Activated CD4-positive, alpha-beta T cell treated with anti-CD3 and anti-CD28 coated beads for 36 hours (primary cell): ENCODE measurements at regions of chr5 and their contacts with region 1.

Region 1: GRCh38 chr5:119367502-119368237 is 11.9 kb downstream of the TNFAIP8 start:
- DNase-seq: peak; percentile 25
- ATAC-seq: peak; percentile 69
- H3K4me3 Mint-ChIP-seq: peak overlapping the region; percentile 57
- H3K27ac Mint-ChIP-seq: peak overlapping the region; percentile 95
- H3K4me1 Mint-ChIP-seq: peaks cover 89% of the 10 kb centered on the region
- H3K27me3 Mint-ChIP-seq: no peaks in the 10 kb centered on the region

Region 2: DNA sequence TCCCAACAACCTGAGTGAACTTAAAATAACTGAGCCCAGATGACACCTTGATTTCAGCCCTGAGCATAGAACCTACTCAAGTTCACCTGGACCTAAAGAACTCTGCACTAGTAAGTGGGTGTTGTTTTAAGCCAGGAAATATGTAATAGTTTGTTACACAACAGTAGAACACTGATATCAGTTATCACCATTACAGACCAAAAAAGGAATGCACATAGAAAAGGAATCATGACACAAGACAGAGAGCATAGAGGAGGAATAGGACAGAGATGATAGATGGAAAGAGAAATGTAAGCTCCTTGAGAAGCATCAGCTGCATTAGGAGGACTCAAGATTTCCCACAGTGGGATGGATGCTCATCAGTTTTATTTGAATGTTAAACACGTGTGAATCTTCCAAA is 1696.1 kb before region 1 on chr5:
- CTCF ChIA-PET with region 1: no interaction called
- POLR2A ChIA-PET with region 1: no interaction called
- intact Hi-C with region 1: no loop called
- DNase-seq: no peak
- ATAC-seq: no peak
- H3K4me3 Mint-ChIP-seq: no peak overlapping the region
- H3K27ac Mint-ChIP-seq: no peak overlapping the region
- H3K4me1 Mint-ChIP-seq: no peaks in the 10 kb centered on the region
- H3K27me3 Mint-ChIP-seq: no peaks in the 10 kb centered on the region

Region 3: GRCh38 chr5:119037501-119038215 is 330.0 kb before region 1 on chr5:
- CTCF ChIA-PET with region 1: no interaction called
- POLR2A ChIA-PET with region 1: no interaction called
- intact Hi-C with region 1: no loop called
- DNase-seq: no peak
- ATAC-seq: no peak
- H3K4me3 Mint-ChIP-seq: no peak overlapping the region
- H3K27ac Mint-ChIP-seq: no peak overlapping the region
- H3K4me1 Mint-ChIP-seq: peaks cover 5% of the 10 kb centered on the region
- H3K27me3 Mint-ChIP-seq: no peaks in the 10 kb centered on the region

Region 4: GRCh38 chr5:119309326-119309725 is 58.3 kb before region 1 on chr5:
- CTCF ChIA-PET with region 1: no interaction called
- POLR2A ChIA-PET with region 1: interaction called, 5 read pairs
- intact Hi-C with region 1: loop called (anchors 2 kb)
- DNase-seq: no peak
- ATAC-seq: no peak
- H3K4me3 Mint-ChIP-seq: peak overlapping the region; percentile 53
- H3K27ac Mint-ChIP-seq: peak overlapping the region; percentile 91
- H3K4me1 Mint-ChIP-seq: peaks cover 91% of the 10 kb centered on the region
- H3K27me3 Mint-ChIP-seq: no peaks in the 10 kb centered on the region

Region 5: DNA sequence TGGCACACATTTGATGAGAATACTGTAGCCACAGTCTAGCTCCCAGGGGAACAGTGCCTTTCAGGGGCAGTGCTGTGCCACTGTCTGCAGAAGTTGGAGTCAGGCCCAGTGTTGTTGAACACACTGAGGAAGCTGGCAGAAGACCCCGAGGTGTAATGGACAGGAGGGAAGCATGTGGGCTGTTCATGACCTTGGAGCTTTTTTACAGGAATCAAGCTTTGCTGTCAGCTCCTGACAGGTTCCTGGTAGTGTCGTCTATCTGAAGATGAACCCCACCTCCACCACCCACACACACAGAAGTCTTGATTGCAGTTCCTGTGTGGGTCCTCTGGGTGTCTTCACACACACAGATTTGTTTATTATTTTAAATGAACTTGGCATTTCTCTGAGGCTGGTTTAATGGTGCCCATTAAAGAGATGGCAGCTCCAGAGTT is 52.1 kb before region 1 on chr5:
- CTCF ChIA-PET with region 1: interaction called, 10 read pairs
- POLR2A ChIA-PET with region 1: interaction called, 5 read pairs
- intact Hi-C with region 1: loop called in 1 of 2 experiments (anchors 2 kb)
- DNase-seq: peak; percentile 78
- ATAC-seq: peak; percentile 77
- H3K4me3 Mint-ChIP-seq: peak overlapping the region; percentile 28
- H3K27ac Mint-ChIP-seq: peak overlapping the region; percentile 91
- H3K4me1 Mint-ChIP-seq: peaks cover 91% of the 10 kb centered on the region
- H3K27me3 Mint-ChIP-seq: no peaks in the 10 kb centered on the region

Region 6: GRCh38 chr5:119328753-119329602 is 38.7 kb before region 1 on chr5:
- CTCF ChIA-PET with region 1: interaction called, 6 read pairs
- POLR2A ChIA-PET with region 1: interaction called, 9 read pairs
- intact Hi-C with region 1: loop called (anchors 2 kb)
- DNase-seq: peak; percentile 80
- ATAC-seq: peak; percentile 58
- H3K4me3 Mint-ChIP-seq: peak overlapping the region; percentile 45
- H3K27ac Mint-ChIP-seq: peak overlapping the region; percentile 98
- H3K4me1 Mint-ChIP-seq: peaks cover 96% of the 10 kb centered on the region
- H3K27me3 Mint-ChIP-seq: no peaks in the 10 kb centered on the region

Region 7: DNA sequence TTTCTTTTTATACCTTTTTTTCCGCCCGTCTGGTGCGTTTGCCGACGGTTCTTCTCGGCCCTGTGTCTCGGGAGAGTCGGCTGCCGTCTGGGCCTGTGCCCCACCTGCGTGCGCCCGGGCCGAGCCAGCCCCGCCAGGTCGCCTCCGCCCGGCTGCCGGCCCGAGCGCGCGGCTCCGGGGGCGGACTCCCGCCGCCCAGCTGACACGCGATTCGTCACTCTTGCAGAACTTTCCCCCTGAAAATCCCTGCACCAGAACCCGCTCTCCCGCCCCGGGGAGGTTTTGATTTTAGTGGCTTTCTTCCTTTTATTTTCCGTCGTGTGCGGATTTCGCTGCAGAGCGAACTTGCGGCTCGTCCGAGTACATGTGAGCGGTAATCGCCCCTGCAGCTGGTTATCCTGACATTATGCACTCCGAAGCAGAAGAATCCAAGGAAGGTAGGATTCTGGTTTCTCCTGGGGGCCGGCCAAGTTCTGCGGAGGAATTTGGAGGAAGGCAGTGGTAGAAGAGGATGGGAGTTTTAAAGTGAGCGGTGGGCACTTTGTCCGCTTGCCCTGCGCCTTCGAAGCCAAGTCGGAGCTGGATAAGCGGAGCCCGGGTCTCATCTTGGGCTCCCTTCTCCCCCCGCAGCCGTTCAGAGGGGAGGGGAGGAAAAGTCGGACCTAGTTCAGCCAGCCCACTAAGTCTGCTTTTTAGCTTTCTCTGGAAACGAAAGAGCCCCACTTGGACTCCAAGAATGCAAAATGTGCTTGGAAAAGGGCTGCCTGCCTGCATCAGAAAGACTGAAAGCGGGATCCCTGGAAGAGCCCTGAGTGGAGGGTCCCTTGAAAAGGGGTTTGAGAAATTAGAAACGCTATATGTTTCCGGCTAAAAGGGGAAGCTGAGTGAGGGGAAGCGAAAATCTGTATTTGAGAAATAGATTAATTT is 11.7 kb before region 1 on chr5 and contains the start of gene TNFAIP8:
- CTCF ChIA-PET with region 1: interaction called, 22 read pairs
- POLR2A ChIA-PET with region 1: interaction called, 4 read pairs
- intact Hi-C with region 1: loop called (anchors 1 kb)
- DNase-seq: peak; percentile 91
- ATAC-seq: peak; percentile 65
- H3K4me3 Mint-ChIP-seq: peak within 1 kb of the TSS; percentile 98
- H3K27ac Mint-ChIP-seq: peak within 1 kb of the TSS; percentile 99
- H3K4me1 Mint-ChIP-seq: peaks cover 62% of the 10 kb centered on the region
- H3K27me3 Mint-ChIP-seq: no peaks in the 10 kb centered on the region
- total RNA-seq, gene TNFAIP8: 166 to 171 TPM

Region 8: DNA sequence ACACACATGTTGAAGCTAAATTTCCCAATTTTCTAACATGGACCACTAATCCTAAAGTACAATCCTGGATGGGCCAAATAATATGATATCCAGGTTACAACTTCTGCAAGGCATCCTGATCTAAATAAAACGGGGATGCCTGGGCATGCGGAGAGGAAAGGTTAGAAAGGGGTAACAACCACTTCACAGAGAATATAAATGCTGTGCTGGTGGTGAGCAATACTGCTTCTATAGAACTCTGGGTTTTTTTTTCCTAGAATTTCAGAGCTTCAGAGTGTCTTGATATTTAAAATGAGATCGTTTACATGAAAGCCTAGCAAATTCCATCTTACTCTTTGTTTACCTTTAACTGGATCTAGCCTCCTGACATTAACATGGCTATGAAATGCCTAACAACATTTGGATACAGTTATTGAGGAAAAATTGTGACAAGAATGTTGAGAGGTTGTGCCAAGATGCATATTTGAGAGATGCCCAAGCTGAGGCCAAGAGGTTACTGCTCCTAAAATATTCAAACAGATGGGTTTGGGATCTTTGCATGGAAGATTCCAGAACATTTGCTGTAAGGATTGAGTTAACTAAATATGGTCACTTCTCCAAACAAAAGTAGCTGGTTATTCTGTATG is 10.5 kb after region 1 on chr5:
- CTCF ChIA-PET with region 1: interaction called, 30 read pairs
- POLR2A ChIA-PET with region 1: interaction called, 3 read pairs
- intact Hi-C with region 1: loop called in 1 of 2 experiments (anchors 1 kb)
- DNase-seq: no peak
- ATAC-seq: peak; percentile 28
- H3K4me3 Mint-ChIP-seq: no peak overlapping the region
- H3K27ac Mint-ChIP-seq: peak overlapping the region; percentile 82
- H3K4me1 Mint-ChIP-seq: peaks cover 74% of the 10 kb centered on the region
- H3K27me3 Mint-ChIP-seq: no peaks in the 10 kb centered on the region